ENCODE measurements at regions of chr5 and their contacts with region 1.

Region 1: DNA sequence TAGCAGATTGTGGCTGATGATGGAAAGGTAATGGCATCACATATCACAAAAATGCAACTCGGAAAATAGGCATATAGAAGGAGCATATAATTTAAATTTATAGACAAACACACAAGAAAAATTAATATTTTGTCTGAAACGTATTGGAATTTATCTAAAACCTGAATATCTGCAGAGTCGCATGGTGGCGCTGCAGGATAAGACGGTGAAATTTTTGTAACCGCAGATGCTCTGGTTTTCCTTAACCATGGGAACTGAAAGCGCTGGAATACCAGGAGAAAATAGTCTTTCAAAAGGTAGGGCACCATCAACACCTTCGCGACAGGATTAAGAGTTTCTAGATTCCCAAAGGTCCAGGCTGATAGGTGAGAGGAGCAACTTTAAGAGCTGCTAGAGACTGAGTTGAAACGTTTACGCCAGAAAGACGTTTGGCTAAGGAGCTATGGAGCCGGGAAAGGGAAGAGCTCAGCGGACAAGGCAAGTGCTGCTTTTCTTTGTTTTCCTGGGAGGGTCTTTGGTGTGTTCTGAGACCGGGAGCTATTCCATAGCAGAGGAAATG is 11.0 kb upstream of the PCDHB15 start:
- DNase-seq: no peak
- H3K27ac ChIP-seq: no peak overlapping the region
- CTCF ChIP-seq: peak; percentile 67

Region 2: DNA sequence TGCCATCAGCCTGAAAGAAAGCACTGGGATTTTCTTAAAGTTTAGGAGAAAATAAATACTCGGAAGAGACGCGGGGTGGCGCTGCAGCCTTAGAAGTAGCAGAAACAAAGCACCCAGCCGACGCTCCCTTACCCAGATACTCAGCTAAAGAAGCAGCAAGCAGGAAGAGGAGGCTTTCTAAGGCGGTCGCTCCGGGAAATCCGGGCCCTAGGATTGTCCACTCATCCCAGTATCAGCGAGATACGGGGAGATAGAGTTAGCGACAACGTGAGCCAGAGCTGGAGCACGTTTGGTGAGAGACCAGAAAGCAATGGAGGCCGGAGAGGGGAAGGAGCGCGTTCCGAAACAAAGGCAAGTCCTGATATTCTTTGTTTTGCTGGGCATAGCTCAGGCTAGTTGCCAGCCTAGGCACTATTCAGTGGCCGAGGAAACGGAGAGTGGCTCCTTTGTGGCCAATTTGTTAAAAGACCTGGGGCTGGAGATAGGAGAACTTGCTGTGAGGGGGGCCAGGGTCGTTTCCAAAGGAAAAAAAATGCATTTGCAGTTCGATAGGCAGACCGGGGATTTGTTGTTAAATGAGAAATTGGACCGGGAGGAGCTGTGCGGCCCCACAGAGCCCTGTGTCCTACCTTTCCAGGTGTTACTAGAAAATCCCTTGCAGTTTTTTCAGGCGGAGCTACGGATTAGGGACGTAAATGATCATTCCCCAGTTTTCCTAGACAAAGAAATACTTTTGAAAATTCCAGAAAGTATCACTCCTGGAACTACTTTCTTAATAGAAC is 139.5 kb before region 1 on chr5 and contains the start of gene PCDHB2:
- CTCF ChIA-PET with region 1: no interaction called
- POLR2A ChIA-PET with region 1: no interaction called
- DNase-seq: peak; percentile 11
- H3K27ac ChIP-seq: no peak within 1 kb of the TSS
- CTCF ChIP-seq: peak; percentile 20; the same call in 1 of the 2 replicates

Region 3: GRCh38 chr5:141250576-141250975 is 16.4 kb after region 1 on chr5:
- CTCF ChIA-PET with region 1: interaction called, 11 read pairs
- POLR2A ChIA-PET with region 1: no interaction called
- DNase-seq: no peak
- H3K27ac ChIP-seq: no peak overlapping the region
- CTCF ChIP-seq: no peak